ENCODE measurements at regions of chr1 and their contacts with region 1.

Region 1: GRCh38 chr1:219514731-219515130 is 98.2 kb downstream of the ZC3H11B start:
- DNase-seq: no peak
- CTCF ChIP-seq: no peak

Region 2: GRCh38 chr1:219460896-219461815 is 53.6 kb before region 1 on chr1:
- CTCF ChIA-PET with region 1: no interaction called
- POLR2A ChIA-PET with region 1: no interaction called
- DNase-seq: peak; percentile 47
- CTCF ChIP-seq: no peak

Region 3: GRCh38 chr1:219498666-219499065 is 16.1 kb before region 1 on chr1:
- CTCF ChIA-PET with region 1: interaction called, 18 read pairs
- POLR2A ChIA-PET with region 1: no interaction called
- DNase-seq: no peak
- CTCF ChIP-seq: no peak

Region 4: GRCh38 chr1:219533282-219533681 is 18.6 kb after region 1 on chr1:
- CTCF ChIA-PET with region 1: interaction called, 15 read pairs
- POLR2A ChIA-PET with region 1: no interaction called
- DNase-seq: no peak
- CTCF ChIP-seq: no peak